ENCODE measurements at regions of chr16 and their contacts with region 1.

Region 1: GRCh38 chr16:81314603-81315270 is at the start of gene GAN:
- DNase-seq: peak; percentile 93
- ATAC-seq: peak; percentile 95 to 96
- H3K4me3 ChIP-seq: peak within 1 kb of the TSS; percentile 69 to 83 (median 80)
- H3K27ac ChIP-seq: peak within 1 kb of the TSS; percentile 75 to 93 (median 88)
- H3K4me1 ChIP-seq: peaks cover 20 to 29% of the 10 kb centered on the region in 2 donors
- H3K27me3 ChIP-seq: no peaks in the 10 kb centered on the region
- CTCF ChIP-seq: no peak
- POLR2A ChIP-seq: peak; percentile 92 to 93
- total RNA-seq, gene GAN: 5.0 to 8.0 (median 6.4) TPM

Region 2: GRCh38 chr16:81006814-81007696 is 307.7 kb before region 1 on chr16 and contains the starts of genes CENPN and CMC2:
- in situ Hi-C with region 1: no loop called
- intact Hi-C with region 1: loop called (anchors 10 kb)
- DNase-seq: peak; percentile 97 to 99
- ATAC-seq: peak; percentile 91 to 95
- H3K4me3 ChIP-seq: peak within 1 kb of the TSS; percentile 87 to 100 (median 98)
- H3K27ac ChIP-seq: peak within 1 kb of the TSS; percentile 95 to 100 (median 100)
- H3K4me1 ChIP-seq: peaks cover 33 to 35% of the 10 kb centered on the region in 2 donors
- H3K27me3 ChIP-seq: no peaks in the 10 kb centered on the region
- CTCF ChIP-seq: peak in 2 of 5 experiments; percentile 12 to 19
- POLR2A ChIP-seq: peak; percentile 97
- total RNA-seq, gene CENPN: 5.2 to 10.9 (median 7.5) TPM
- total RNA-seq, gene CMC2: 78.8 to 89.1 (median 82.7) TPM

Region 3: GRCh38 chr16:81077076-81077940 is 237.4 kb before region 1 on chr16 and contains the start of gene C16orf46:
- in situ Hi-C with region 1: loop called in 1 of 4 experiments (anchors 25 kb)
- intact Hi-C with region 1: loop called (anchors 5 kb)
- DNase-seq: peak; percentile 94 to 95
- ATAC-seq: peak; percentile 94 to 97
- H3K4me3 ChIP-seq: peak within 1 kb of the TSS; percentile 73 to 90 (median 82)
- H3K27ac ChIP-seq: peak within 1 kb of the TSS; percentile 90 to 99 (median 94)
- H3K4me1 ChIP-seq: peaks cover 4 to 7% of the 10 kb centered on the region in 2 donors
- H3K27me3 ChIP-seq: no peaks in the 10 kb centered on the region
- CTCF ChIP-seq: no peak
- POLR2A ChIP-seq: peak; percentile 77 to 85
- total RNA-seq, gene C16orf46: 0.88 TPM in 1 of 4 donors, not detected in the others

Region 4: GRCh38 chr16:81095953-81096717 is 218.6 kb before region 1 on chr16 and contains the start of gene GCSH:
- in situ Hi-C with region 1: loop called in 1 of 4 experiments (anchors 25 kb)
- intact Hi-C with region 1: loop called (anchors 2 kb)
- DNase-seq: peak; percentile 99
- ATAC-seq: peak; percentile 95
- H3K4me3 ChIP-seq: peak within 1 kb of the TSS; percentile 71 to 97 (median 86)
- H3K27ac ChIP-seq: peak within 1 kb of the TSS; percentile 80 to 93 (median 90)
- H3K4me1 ChIP-seq: peaks cover 5 to 7% of the 10 kb centered on the region in 2 donors
- H3K27me3 ChIP-seq: no peaks in the 10 kb centered on the region
- CTCF ChIP-seq: no peak
- POLR2A ChIP-seq: peak; percentile 58 to 67
- total RNA-seq, gene GCSH: 18.5 to 40.4 (median 30.9) TPM

Region 5: DNA sequence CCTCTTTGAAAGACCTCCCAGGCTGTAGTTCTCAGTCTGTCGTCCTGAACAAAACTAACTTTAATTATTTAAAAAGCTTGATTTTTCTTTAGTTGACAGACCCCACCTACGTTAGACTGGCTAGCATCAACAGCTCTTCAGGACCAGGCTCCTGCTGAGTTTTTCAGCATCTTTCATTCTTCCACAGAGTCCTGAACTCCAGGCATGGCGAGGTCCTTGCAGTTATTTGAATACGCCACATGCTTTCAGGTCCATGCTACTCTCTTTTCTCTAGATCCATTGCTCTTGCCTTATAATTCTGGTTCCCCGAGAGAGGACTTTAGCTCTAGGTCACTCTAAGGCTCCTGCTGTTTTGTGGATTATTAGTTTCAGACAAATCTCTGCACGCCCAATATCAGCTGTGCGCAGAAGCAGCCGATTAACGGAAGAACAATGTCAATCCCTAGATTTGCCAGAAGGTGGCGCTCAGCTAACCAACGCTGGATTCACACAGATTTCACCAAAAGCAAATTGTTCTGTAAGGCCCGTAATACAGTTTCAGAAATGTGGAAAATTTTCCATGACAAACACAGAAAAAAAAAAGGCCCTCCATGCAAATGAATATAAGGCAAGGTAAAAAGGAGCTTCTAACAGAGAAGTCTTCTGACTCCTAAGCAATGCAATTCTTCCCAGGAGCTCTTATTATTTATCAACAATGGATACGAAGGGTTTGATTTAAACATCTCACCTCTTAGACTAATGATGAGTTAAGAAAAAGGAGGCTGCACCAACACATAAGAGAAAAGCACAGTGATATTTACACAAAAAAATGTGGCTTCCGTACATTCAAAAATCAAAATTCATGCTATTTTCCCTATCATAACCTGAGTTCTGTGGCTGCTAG is 109.7 kb before region 1 on chr16:
- in situ Hi-C with region 1: loop called in 1 of 4 experiments (anchors 10 kb)
- intact Hi-C with region 1: loop called (anchors 1 kb)
- DNase-seq: no peak
- ATAC-seq: peak; percentile 54 to 62
- H3K4me3 ChIP-seq: no peak overlapping the region
- H3K27ac ChIP-seq: no peak overlapping the region
- H3K4me1 ChIP-seq: no peaks in the 10 kb centered on the region
- H3K27me3 ChIP-seq: no peaks in the 10 kb centered on the region
- CTCF ChIP-seq: peak in 4 of 5 experiments; percentile 48 to 53 (median 50)
- POLR2A ChIP-seq: no peak

Region 6: GRCh38 chr16:81238296-81239011 is 76.3 kb before region 1 on chr16 and contains the start of gene BCO1:
- in situ Hi-C with region 1: no loop called
- intact Hi-C with region 1: loop called (anchors 2 kb)
- DNase-seq: no peak
- ATAC-seq: peak; percentile 9 to 13
- H3K4me3 ChIP-seq: peak within 1 kb of the TSS; percentile 13 to 47 (median 25)
- H3K27ac ChIP-seq: peak within 1 kb of the TSS; percentile 71 to 83 (median 76)
- H3K4me1 ChIP-seq: peaks cover 10 to 13% of the 10 kb centered on the region in 2 donors
- H3K27me3 ChIP-seq: no peaks in the 10 kb centered on the region
- CTCF ChIP-seq: no peak
- POLR2A ChIP-seq: no peak
- total RNA-seq, gene BCO1: not detected

Region 7: DNA sequence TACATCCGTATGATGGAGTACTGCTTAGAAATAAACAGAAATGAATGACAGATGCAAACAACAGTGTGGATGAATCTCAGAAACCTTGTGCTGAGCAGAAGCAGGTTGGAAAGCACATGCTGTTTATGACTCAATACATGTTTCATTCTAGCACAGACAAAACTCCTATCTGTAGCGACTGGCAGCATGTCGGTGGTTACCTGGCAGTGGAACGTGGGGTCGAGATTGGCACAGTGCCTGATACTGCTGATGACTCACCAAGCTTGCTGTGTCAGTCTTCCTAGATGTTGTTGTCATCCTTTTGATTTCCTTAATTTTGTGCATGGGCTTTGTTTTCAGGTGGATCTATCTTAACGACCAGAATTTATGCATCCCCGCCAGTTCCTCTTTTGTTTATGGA is 62.1 kb after region 1 on chr16:
- in situ Hi-C with region 1: no loop called
- intact Hi-C with region 1: no loop called
- DNase-seq: no peak
- ATAC-seq: no peak
- H3K4me3 ChIP-seq: no peak overlapping the region
- H3K27ac ChIP-seq: no peak overlapping the region
- H3K4me1 ChIP-seq: no peaks in the 10 kb centered on the region
- H3K27me3 ChIP-seq: no peaks in the 10 kb centered on the region
- CTCF ChIP-seq: no peak
- POLR2A ChIP-seq: no peak